OCI-LY7 (cell line): ENCODE measurements at regions of chr10 and their contacts with region 1.

Region 1: GRCh38 chr10:13371897-13372470 is 23.9 kb upstream of the SEPHS1 start:
- DNase-seq: peak; percentile 81
- H3K4me3 ChIP-seq: no peak overlapping the region
- H3K27ac ChIP-seq: no peak overlapping the region
- H3K4me1 ChIP-seq: no peaks in the 10 kb centered on the region
- CTCF ChIP-seq: peak; percentile 98

Region 2: GRCh38 chr10:13440185-13441061 is 68.4 kb after region 1 on chr10:
- CTCF ChIA-PET with region 1: interaction called, 8 read pairs
- POLR2A ChIA-PET with region 1: no interaction called
- intact Hi-C with region 1: loop called (anchors 1 kb)
- DNase-seq: peak; percentile 55
- H3K4me3 ChIP-seq: peak overlapping the region; percentile 21
- H3K27ac ChIP-seq: no peak overlapping the region
- H3K4me1 ChIP-seq: no peaks in the 10 kb centered on the region
- CTCF ChIP-seq: peak; percentile 92

Region 3: DNA sequence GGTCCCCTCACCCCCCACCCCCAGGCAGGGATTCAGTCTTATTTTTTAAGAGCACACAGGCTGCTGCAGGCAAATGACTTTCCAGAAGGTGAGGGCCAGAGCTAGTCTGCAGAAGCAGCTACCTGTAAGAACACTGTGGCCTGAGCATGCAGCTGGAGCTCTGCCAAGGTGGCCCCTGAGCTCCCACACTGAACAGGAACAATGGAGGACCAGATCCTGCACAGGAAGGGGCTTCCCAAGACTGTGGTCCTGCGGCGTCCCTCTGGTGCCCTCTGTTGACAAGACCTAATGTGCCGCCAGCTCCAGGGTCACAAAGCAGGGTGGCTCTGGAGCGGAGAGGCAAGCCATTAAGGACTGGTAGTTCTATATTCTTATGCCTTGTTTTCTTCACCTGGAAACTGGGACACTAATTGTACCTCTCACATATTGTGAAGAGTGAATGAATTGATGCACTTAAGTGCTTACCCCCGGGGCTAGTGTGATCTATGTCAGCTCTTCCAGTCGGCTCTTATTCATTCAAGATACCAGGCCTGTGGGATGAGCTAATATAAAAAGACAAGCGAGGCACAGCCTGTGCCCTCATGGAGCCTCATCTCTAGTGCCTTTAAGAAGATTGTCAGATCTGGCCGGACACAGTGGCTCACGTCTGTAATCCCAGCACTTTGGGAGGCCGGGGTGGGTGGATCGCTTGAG is 164.8 kb after region 1 on chr10:
- CTCF ChIA-PET with region 1: no interaction called
- POLR2A ChIA-PET with region 1: interaction called, 5 read pairs
- intact Hi-C with region 1: loop called (anchors 2 kb)
- DNase-seq: peak; percentile 43
- H3K4me3 ChIP-seq: no peak overlapping the region
- H3K27ac ChIP-seq: no peak overlapping the region
- H3K4me1 ChIP-seq: no peaks in the 10 kb centered on the region
- CTCF ChIP-seq: peak; percentile 71

Region 4: GRCh38 chr10:13586676-13587355 is 214.8 kb after region 1 on chr10 and contains the start of gene PRPF18:
- CTCF ChIA-PET with region 1: no interaction called
- POLR2A ChIA-PET with region 1: no interaction called
- intact Hi-C with region 1: loop called (anchors 2 kb)
- DNase-seq: peak; percentile 94
- H3K4me3 ChIP-seq: peak within 1 kb of the TSS; percentile 91
- H3K27ac ChIP-seq: no peak within 1 kb of the TSS
- H3K4me1 ChIP-seq: peaks cover 11% of the 10 kb centered on the region
- CTCF ChIP-seq: peak; percentile 97
- total RNA-seq, gene PRPF18: 21.1 and 32.4 TPM in 2 replicates

Region 5: DNA sequence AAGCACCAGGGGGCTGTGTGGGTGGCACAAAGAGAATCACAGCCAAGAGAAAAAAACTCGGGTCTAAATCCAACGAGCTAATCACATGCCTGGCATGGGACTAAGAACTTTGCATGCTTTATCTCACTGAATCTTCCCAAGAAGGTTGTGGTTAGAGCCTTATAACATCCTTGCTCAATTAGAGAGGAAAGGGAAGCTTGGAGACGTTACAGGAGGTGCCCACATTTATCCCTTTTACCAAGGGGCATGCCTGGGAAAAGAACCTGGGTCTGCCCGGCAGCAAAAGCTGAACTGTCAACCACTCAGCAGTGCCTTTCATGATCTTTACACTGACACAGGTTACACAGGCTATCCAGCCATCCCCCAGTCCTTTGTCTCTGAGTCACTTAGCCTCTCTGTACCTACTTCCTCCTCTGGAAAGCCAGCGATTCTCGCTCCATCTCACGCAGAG is 404.9 kb after region 1 on chr10:
- CTCF ChIA-PET with region 1: no interaction called
- POLR2A ChIA-PET with region 1: no interaction called
- intact Hi-C with region 1: loop called (anchors 2 kb)
- DNase-seq: no peak
- H3K4me3 ChIP-seq: no peak overlapping the region
- H3K27ac ChIP-seq: no peak overlapping the region
- H3K4me1 ChIP-seq: peaks cover 8% of the 10 kb centered on the region
- CTCF ChIP-seq: no peak